ENCODE measurements at regions of chr1 and their contacts with region 1.

Region 1: GRCh38 chr1:54488779-54489626 is 59.0 kb upstream of the ACOT11 start:
- DNase-seq: peak; percentile 77 to 92 (median 83)
- ATAC-seq: peak; percentile 42 to 78 (median 75)
- H3K4me3 ChIP-seq: peak overlapping the region; percentile 48 to 88 (median 65)
- H3K27ac ChIP-seq: peak overlapping the region; percentile 78 to 97 (median 92)
- H3K4me1 ChIP-seq: peaks cover 3 to 32% (median 20%) of the 10 kb centered on the region in 12 donors
- H3K27me3 ChIP-seq: peaks cover 0 to 6% (median 0%) of the 10 kb centered on the region in 9 donors
- CTCF ChIP-seq: peak; percentile 93 to 99 (median 98)
- POLR2A ChIP-seq: no peak

Region 2: GRCh38 chr1:54121482-54122134 is 367.4 kb before region 1 on chr1:
- intact Hi-C with region 1: loop called (anchors 1 to 5 kb)
- DNase-seq: peak; percentile 77 to 89 (median 82)
- ATAC-seq: peak; percentile 80 to 94 (median 88)
- H3K4me3 ChIP-seq: peak overlapping the region in 10 of 12 donors; percentile 17 to 44 (median 24)
- H3K27ac ChIP-seq: no peak overlapping the region
- H3K4me1 ChIP-seq: peaks cover 0 to 13% (median 8%) of the 10 kb centered on the region in 12 donors
- H3K27me3 ChIP-seq: peaks cover 0 to 4% (median 0%) of the 10 kb centered on the region in 9 donors
- CTCF ChIP-seq: peak; percentile 62 to 87 (median 77)
- POLR2A ChIP-seq: no peak

Region 3: DNA sequence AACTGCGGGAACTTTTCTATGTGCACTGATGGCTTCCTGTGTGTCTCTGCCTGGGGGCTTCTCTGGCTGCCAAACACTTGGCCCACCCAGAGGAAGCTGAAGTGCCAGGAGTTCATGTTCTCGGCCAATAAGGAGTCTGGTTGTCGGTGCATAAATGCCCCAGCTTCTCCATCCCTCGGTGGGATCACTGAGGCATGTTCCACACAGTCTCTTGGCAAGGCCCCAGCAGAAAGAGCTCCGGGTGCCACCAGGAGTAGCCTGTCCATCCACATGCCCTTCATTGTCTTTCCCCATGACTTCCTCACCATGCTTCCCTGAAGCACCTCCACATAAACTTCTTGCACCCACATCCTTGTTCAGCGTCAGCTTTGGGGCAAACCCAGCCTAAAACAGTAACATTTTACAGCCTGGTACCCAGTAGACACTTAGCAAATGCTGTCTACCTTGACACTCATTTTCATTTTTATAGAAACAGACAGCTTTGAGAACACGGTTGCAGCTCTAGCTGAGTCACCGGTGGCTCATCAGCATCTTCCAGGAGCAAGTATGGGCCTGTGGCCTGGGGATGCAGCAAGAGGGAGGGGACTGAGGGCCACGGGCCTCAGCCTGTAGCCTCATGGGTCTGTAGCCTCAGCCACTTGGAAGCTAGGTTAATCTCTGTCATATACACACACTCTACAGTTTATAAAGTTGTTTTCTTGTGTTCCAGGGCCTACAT is 321.4 kb before region 1 on chr1:
- intact Hi-C with region 1: no loop called
- DNase-seq: no peak
- ATAC-seq: no peak
- H3K4me3 ChIP-seq: no peak overlapping the region
- H3K27ac ChIP-seq: no peak overlapping the region
- H3K4me1 ChIP-seq: no peaks in the 10 kb centered on the region
- H3K27me3 ChIP-seq: no peaks in the 10 kb centered on the region
- CTCF ChIP-seq: no peak
- POLR2A ChIP-seq: no peak

Region 4: GRCh38 chr1:54218883-54219687 is 269.9 kb before region 1 on chr1:
- intact Hi-C with region 1: loop called in 1 of 10 experiments (anchors 2 kb)
- DNase-seq: no peak
- ATAC-seq: peak in 2 of 4 donors; percentile 4 to 23
- H3K4me3 ChIP-seq: no peak overlapping the region
- H3K27ac ChIP-seq: peak overlapping the region in 8 of 12 donors; percentile 29 to 74 (median 54)
- H3K4me1 ChIP-seq: peaks cover 0 to 45% (median 23%) of the 10 kb centered on the region in 12 donors
- H3K27me3 ChIP-seq: no peaks in the 10 kb centered on the region
- CTCF ChIP-seq: peak in 3 of 12 donors; percentile 5 to 22 (median 22)
- POLR2A ChIP-seq: no peak

Region 5: DNA sequence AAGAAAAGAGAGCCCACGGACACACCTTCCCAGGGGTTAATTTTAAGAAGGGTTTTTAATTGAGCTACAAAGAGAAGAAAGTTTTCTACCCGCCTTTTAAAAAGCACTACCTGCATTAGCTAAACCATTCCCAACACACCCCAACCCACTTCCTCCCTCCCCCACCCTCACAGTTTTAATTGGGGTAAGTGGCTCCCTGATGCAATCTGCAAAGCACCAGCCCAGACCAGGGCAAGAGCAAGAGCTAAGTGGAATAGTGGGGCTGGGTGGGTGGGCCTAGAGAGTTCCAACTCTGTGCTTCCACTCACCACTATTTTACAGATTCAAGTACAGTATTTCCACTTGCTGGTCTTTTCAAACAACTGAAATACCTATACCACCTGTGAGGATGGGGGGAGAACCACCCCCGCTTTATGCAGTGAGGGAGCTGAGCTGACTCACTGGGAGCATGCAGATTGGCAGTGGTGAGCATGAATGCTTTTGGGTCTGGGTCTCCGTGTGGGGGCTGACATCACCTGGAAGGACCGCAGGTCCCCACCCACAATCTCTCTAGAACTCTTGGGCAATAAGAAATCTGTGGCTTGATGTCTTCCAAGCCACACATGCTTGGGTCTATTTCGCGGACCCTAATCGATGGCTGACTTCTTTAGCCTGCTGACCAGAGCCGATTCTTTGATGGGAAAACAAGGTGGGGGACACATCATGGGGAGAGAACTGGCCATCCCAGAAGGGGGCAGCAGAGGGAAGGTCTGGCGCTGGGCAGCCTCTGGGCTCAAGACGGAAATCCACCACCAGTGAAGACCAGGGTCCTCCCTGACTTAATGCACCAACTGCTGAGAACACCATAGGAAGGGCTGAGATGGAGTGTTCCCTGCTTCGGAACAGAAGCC is 178.3 kb before region 1 on chr1:
- intact Hi-C with region 1: loop called in 9 of 10 experiments (anchors 1 to 10 kb)
- DNase-seq: peak in 3 of 5 donors; percentile 45 to 64 (median 56)
- ATAC-seq: peak; percentile 10 to 50 (median 36)
- H3K4me3 ChIP-seq: no peak overlapping the region
- H3K27ac ChIP-seq: peak overlapping the region in 5 of 12 donors; percentile 20 to 67 (median 42)
- H3K4me1 ChIP-seq: peaks cover 0 to 87% (median 52%) of the 10 kb centered on the region in 12 donors
- H3K27me3 ChIP-seq: no peaks in the 10 kb centered on the region
- CTCF ChIP-seq: peak; percentile 41 to 72 (median 61)
- POLR2A ChIP-seq: no peak

Region 6: GRCh38 chr1:54355931-54356679 is 132.9 kb before region 1 on chr1:
- intact Hi-C with region 1: loop called in 2 of 10 experiments (anchors 2 to 5 kb)
- DNase-seq: no peak
- ATAC-seq: no peak
- H3K4me3 ChIP-seq: peak overlapping the region in 4 of 12 donors; percentile 11 to 39 (median 15)
- H3K27ac ChIP-seq: peak overlapping the region in 5 of 12 donors; percentile 2 to 30 (median 13)
- H3K4me1 ChIP-seq: peaks cover 4 to 86% (median 57%) of the 10 kb centered on the region in 12 donors
- H3K27me3 ChIP-seq: no peaks in the 10 kb centered on the region
- CTCF ChIP-seq: no peak
- POLR2A ChIP-seq: no peak

Measured in heart left ventricle (tissue), 16 donors.